GM13976 (cell line): ENCODE measurements at regions of chr1 and their contacts with region 1.

Region 1: DNA sequence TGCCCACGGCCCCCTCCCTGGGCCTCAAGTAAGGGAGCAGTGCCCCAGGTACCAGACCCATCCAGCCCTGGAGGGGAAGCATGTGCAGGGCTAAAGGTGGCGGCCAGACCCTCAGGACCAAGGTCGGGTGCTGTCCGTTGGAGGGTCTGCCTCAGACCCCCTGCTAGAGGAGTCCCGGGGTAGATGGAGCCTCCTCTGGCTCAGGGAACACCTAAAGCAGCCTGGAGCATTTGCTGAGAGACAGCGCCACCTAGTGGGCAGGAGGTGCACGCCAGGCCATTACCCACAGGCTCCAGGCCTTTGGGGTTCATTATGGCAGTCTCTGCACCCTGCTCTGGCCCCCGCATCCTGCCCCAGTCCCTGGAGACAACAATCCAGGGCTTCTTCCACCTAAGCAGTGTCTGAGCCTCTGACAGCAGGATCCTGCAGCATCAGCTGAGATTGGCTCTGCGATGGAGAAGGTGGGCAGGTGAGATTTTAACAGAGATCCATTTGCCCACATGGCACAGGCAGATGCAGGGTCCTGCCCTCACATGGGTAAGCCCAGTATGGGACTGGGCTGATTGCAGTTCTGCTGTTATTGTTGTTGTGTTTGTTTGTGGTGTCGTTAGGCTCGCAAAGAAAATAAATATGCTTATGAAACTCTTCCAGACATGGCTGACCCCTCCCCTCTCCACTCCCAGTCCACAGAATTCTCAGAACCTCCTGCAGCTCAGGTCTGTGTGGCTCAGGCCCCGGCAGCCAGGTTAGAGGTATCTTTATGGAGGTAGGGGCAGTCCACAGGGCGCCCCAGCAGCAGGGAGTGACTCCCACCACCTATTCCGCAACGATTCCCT is 42.4 kb downstream of the CTNNBIP1 start:
- DNase-seq: peak; percentile 94
- CTCF ChIP-seq: peak; percentile 93

Region 2: DNA sequence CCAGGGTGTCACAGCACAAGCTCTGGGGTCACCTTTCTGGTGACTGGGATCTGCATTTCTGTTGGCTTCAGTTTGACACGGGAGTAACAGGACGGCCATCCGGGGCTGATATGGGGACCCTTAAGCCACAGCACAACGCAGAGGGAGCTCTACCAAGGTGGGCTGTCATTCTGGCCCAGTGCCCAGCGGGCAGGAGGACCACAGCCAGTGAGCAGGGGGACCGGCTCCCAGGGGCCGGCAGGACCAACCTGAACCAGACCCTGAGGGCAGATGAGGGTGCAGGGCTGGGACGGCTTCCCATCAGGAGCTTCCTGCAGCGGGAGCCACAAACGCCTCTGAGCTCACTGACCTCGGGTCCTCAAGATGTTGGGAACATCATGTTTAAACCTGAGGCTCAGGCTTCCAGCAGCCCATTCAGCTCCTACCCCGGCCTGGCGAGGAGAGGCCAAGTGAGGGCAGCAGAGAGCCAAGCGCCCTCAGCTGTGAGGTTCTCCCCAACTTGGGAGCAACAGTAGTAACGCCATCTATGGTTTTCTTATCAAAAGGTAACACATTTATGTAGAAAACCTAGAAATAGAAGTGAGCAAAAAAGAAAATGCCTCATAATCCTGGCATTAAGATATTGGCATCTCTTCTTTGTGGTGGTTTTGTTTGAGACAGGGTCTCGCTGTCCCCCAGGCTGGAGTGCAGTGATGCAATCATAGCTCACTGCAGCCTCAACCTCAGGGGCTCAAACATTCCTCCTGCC is 252.1 kb before region 1 on chr1:
- in situ Hi-C with region 1: loop called (anchors 25 kb)
- DNase-seq: peak; percentile 87
- CTCF ChIP-seq: peak; percentile 86

Region 3: GRCh38 chr1:9784508-9785133 is 83.0 kb before region 1 on chr1:
- in situ Hi-C with region 1: loop called (anchors 10 kb)
- DNase-seq: peak; percentile 70
- CTCF ChIP-seq: peak; percentile 64

Region 4: GRCh38 chr1:9929431-9930385 is 62.1 kb after region 1 on chr1:
- in situ Hi-C with region 1: no loop called
- DNase-seq: no peak
- CTCF ChIP-seq: no peak